ENCODE measurements at regions of chr11 and their contacts with region 1.

Region 1: GRCh38 chr11:62805076-62805892 is at the start of gene NXF1:
- DNase-seq: peak; percentile 98 to 99
- ATAC-seq: peak; percentile 86 to 95 (median 86)
- H3K4me3 ChIP-seq: peak within 1 kb of the TSS; percentile 88
- H3K4me3 Mint-ChIP-seq: peak within 1 kb of the TSS; percentile 96
- H3K27ac ChIP-seq: peak within 1 kb of the TSS; percentile 78
- H3K27ac Mint-ChIP-seq: peak within 1 kb of the TSS; percentile 94 to 99
- H3K4me1 ChIP-seq: peaks cover 25% of the 10 kb centered on the region
- H3K4me1 Mint-ChIP-seq: peaks cover 20 to 41% of the 10 kb centered on the region in 2 donors
- H3K27me3 ChIP-seq: no peaks in the 10 kb centered on the region
- H3K27me3 Mint-ChIP-seq: no peaks in the 10 kb centered on the region
- CTCF ChIP-seq: peak; percentile 25
- total RNA-seq, gene NXF1: 284 to 341 (median 319) TPM

Region 2: DNA sequence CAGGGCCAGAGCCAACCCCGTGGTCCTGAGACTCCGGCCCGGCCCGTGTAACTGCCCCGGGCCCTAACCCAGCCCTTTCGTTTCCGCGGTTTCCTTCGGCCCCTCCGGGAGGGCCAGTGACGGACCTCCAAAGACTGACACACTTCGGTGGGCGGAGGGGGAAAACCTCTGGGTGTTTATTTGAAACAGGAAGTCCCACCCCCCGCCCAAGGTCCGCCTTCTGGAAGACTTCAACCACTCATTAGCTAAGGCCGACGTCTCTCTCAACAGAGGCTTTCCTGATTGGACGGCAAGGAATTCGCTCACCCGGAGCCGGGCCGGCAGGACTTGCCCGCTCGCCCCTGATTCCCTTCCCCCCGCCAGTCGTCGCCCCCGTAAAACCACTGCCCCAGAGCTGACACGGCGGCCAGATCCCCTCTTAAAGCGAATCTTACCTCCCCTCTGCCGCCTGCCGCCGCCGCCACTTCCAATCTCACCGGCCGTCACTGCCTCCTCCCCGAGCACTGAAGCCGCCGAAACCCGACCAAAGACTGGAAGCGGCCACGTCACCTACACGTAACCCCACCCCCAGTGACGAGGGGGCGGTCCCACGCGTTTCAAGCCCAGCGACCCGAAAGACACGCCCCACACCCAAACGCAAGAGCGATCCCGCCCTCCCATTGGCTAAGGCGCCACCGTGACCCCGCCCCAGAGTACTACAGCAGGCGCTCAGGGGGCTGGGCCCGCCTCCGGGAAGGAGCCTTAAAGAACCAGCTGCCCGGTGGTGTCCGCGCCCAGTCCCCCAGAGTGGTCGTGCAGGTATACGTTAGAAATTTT is 26.4 kb after region 1 on chr11 and contains the start of gene STX5:
- intact Hi-C with region 1: loop called (anchors 1 kb)
- DNase-seq: peak; percentile 100
- ATAC-seq: peak; percentile 90 to 98 (median 93)
- H3K4me3 ChIP-seq: peak within 1 kb of the TSS; percentile 87
- H3K4me3 Mint-ChIP-seq: peak within 1 kb of the TSS; percentile 97
- H3K27ac ChIP-seq: peak within 1 kb of the TSS; percentile 93
- H3K27ac Mint-ChIP-seq: peak within 1 kb of the TSS; percentile 99 to 100
- H3K4me1 ChIP-seq: peaks cover 22% of the 10 kb centered on the region
- H3K4me1 Mint-ChIP-seq: peaks cover 27 to 42% of the 10 kb centered on the region in 2 donors
- H3K27me3 ChIP-seq: no peaks in the 10 kb centered on the region
- H3K27me3 Mint-ChIP-seq: no peaks in the 10 kb centered on the region
- CTCF ChIP-seq: no peak
- total RNA-seq, gene STX5: 138 to 171 (median 166) TPM